ENCODE measurements at regions of chr20 and their contacts with region 1.

Region 1: DNA sequence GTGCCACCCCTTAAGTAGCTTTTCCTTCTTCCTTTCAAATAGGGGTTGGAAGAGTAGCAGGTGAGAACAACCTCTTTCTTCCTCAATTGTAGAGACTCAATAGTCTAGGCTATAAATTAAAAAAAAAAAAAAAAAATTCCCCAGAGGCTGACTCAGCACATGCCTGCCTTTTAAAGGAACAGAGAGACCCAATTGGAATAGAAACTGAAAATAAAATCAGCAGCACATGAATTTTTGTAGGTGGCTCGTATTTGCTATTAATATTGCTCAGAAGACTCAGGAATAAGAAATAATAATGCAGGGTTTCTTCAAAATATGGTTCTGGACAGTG is 19.3 kb downstream of the TOP1 start:
- DNase-seq: no peak
- H3K4me3 Mint-ChIP-seq: peak overlapping the region; percentile 81
- H3K27ac Mint-ChIP-seq: peak overlapping the region; percentile 80
- H3K4me1 Mint-ChIP-seq: peaks cover 91% of the 10 kb centered on the region
- H3K27me3 Mint-ChIP-seq: no peaks in the 10 kb centered on the region

Region 2: DNA sequence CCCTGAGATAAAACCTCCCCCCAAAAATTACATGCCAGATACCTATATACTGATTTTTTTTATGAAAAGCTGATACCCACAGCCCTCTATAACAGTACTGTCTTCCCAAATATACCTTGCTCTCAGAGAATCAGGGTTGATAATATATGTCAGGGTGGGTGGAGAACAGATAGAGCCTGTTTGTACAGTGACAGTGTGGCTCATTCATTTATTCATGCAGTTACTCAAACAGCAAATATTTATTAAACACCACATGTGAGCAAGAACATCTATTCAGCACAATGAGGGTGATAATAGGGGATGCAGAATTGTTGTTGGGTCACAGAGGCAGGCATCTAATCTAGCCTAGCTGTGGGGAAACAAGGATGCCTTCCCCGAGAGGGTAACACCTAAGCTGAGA is 693.1 kb before region 1 on chr20:
- intact Hi-C with region 1: no loop called
- DNase-seq: no peak
- H3K4me3 Mint-ChIP-seq: no peak overlapping the region
- H3K27ac Mint-ChIP-seq: no peak overlapping the region
- H3K4me1 Mint-ChIP-seq: no peaks in the 10 kb centered on the region
- H3K27me3 Mint-ChIP-seq: no peaks in the 10 kb centered on the region

Region 3: DNA sequence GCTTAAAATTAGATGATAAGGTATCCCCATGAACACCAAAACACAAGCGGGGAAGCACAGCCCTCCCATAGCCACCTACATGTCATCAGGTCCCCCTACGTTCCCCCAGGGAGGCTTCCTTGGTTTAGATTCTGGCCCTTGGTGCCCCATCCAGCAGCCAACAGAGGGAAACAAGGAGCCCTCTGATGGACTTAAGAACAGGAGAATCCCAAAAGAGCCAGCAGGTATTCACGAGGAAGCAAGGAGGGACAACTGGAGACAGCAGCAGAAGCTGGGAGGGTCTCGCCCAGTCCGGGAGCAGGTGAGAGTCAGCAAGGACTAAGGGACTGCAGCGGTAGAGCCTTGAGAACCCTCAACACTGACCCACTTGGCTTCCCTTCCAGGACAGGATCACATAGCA is 77.7 kb before region 1 on chr20:
- intact Hi-C with region 1: no loop called
- DNase-seq: no peak
- H3K4me3 Mint-ChIP-seq: no peak overlapping the region
- H3K27ac Mint-ChIP-seq: no peak overlapping the region
- H3K4me1 Mint-ChIP-seq: peaks cover 10% of the 10 kb centered on the region
- H3K27me3 Mint-ChIP-seq: peaks cover 7% of the 10 kb centered on the region

Region 4: DNA sequence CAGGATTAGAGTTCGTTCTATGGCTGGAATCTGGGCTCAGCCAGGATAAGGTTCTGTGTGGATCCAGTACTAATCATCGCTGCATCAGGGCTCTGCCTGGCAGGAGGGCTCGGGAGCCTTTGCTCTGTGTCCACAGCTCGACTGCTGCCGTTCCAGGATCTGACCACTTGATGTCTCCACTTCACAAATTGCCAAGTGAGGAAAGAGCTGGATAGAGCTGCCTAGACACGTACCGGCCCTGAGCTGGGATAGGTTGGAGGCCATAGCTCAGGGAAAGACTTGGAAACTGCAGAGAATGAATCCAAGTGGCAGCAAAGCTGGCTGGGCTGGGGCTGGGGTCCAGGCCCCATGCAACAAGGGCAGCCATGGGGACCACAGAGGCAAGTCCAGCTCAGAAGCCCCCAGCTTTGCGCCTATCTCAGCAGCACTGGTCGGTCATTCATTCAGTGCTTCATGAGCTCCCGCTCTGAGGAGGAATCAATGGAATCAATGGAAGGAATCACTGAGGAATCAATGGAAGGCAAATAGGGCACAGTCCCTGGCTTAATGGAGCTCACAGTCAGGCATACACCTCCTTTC is 57.3 kb before region 1 on chr20:
- intact Hi-C with region 1: loop called (anchors 2 kb)
- DNase-seq: peak; percentile 57
- H3K4me3 Mint-ChIP-seq: no peak overlapping the region
- H3K27ac Mint-ChIP-seq: peak overlapping the region; percentile 71
- H3K4me1 Mint-ChIP-seq: peaks cover 44% of the 10 kb centered on the region
- H3K27me3 Mint-ChIP-seq: no peaks in the 10 kb centered on the region

Region 5: DNA sequence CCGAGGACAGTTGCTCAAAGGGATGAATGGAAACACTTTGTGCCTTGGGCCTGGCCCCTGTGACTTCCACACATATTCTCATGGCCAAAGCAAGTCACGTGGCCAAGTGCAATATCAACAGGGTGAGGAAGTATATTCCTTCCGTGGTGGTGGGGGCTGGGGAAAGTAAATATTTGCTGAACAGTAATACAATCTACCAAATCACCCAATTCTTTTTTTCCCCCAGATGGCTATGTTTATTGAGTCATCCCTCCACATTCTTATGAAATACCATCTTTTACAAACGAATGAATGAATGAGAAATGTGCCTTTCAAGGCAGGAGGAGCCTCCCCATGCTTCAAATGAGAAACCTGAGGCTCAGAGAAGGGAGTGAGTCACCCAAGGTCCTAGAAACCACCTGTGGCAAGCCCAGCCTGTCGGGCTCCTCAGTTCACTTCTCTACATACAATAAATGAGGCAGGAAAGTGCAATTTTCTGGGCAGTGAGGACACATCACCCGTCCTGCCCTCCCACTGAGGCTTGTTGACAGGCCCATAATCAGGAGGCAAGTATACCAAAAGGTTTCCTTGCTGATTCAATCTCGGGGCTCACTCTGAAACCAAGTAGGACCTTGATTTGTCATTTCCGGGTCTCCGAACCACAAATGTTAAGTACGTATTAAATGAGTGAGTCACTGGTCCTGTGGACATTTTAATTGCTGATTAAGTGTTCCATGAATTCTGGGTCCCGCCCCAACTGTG is 44.6 kb before region 1 on chr20:
- intact Hi-C with region 1: loop called (anchors 1 kb)
- DNase-seq: peak; percentile 56
- H3K4me3 Mint-ChIP-seq: peak overlapping the region; percentile 66
- H3K27ac Mint-ChIP-seq: peak overlapping the region; percentile 94
- H3K4me1 Mint-ChIP-seq: peaks cover 42% of the 10 kb centered on the region
- H3K27me3 Mint-ChIP-seq: no peaks in the 10 kb centered on the region

Region 6: DNA sequence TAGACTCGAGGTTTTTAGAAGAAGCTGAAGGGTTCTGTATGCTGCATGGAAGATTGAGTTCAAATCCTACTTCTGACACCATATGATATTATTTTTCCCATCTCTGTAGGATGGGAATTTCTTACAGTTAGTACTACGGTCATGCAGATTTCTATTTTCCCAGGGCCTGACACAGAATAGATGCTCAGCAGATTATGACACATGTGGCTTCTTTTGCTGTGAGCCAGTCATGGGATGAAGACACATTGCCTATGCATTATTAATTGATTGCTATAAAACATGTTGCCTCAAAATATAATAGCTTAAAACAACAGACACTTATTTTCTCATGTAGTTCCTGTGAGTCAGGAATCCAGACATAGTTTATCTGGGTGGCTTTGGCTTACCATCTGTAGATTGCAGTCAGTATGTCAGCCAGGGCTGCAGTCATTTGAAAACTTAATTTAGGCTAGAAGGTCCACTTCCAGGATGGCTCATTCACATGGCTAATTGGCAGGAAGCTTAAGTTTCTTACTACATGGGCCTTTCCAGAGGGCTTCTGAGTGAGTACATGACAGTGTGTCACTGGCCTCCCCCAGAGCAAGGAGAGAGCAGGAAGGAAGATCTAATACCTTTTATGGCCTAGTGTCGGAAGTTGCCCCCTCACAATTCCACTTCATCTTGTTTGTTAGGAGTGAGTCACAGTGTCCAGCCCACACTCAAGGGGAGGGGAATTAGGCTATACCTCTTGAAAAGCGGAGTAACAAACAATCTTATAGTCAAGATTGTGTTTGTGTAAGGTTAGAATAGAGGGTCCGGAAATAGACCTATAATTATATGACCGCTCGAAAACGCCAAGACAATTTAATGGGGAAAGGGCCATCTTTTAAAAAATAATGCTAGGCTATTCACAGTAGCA is 10.3 kb after region 1 on chr20:
- intact Hi-C with region 1: loop called (anchors 1 kb)
- DNase-seq: no peak
- H3K4me3 Mint-ChIP-seq: no peak overlapping the region
- H3K27ac Mint-ChIP-seq: peak overlapping the region; percentile 76
- H3K4me1 Mint-ChIP-seq: peaks cover 54% of the 10 kb centered on the region
- H3K27me3 Mint-ChIP-seq: no peaks in the 10 kb centered on the region

Region 7: GRCh38 chr20:41072190-41072863 is 24.4 kb after region 1 on chr20:
- intact Hi-C with region 1: loop called (anchors 1 kb)
- DNase-seq: no peak
- H3K4me3 Mint-ChIP-seq: peak overlapping the region; percentile 35
- H3K27ac Mint-ChIP-seq: peak overlapping the region; percentile 74
- H3K4me1 Mint-ChIP-seq: peaks cover 78% of the 10 kb centered on the region
- H3K27me3 Mint-ChIP-seq: no peaks in the 10 kb centered on the region

Region 8: GRCh38 chr20:41095110-41095969 is 47.4 kb after region 1 on chr20:
- intact Hi-C with region 1: loop called (anchors 1 kb)
- DNase-seq: peak; percentile 34
- H3K4me3 Mint-ChIP-seq: no peak overlapping the region
- H3K27ac Mint-ChIP-seq: no peak overlapping the region
- H3K4me1 Mint-ChIP-seq: peaks cover 13% of the 10 kb centered on the region
- H3K27me3 Mint-ChIP-seq: no peaks in the 10 kb centered on the region

Region 9: DNA sequence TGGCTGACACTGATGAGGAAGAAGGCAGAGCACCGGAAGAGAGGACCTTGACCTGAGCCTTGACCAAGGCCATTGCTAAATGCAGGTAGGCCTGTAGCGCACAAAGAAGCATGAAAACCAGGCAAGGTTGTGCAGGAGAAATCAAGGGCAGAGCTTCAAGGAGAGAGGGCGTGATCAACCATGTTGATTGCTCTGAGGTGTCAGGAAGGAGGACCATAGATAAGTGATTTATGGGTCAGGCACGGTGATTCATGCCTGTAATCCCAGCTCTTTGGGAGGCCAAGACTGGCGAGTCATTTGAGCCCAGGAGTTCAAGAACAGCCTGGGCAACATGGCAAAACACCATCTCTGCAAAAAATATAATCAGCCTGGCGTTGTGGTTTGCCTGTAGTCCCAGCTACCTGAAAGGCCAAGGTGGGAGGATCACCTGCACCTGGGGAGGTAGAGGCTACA is 101.8 kb after region 1 on chr20:
- intact Hi-C with region 1: no loop called
- DNase-seq: no peak
- H3K4me3 Mint-ChIP-seq: peak overlapping the region; percentile 21
- H3K27ac Mint-ChIP-seq: peak overlapping the region; percentile 70
- H3K4me1 Mint-ChIP-seq: peaks cover 94% of the 10 kb centered on the region
- H3K27me3 Mint-ChIP-seq: no peaks in the 10 kb centered on the region

Measured in activated T-helper 1 cell treated with anti-CD3 and anti-CD28 coated beads, Interleukin-12 subunit alpha, Interleukin-12 subunit beta, Interleukin-2, Interleukin-4 antibody, amounts not matched to agents 30 ng/mL and 10 ng/mL and 1 ng/mL, durations not matched to agents 14 hours and 24 hours and 36 hours (primary cell).